Right ventricle myocardium superior (tissue), 1 donor: ENCODE measurements at regions of chr13 and their contacts with region 1.

Region 1: GRCh38 chr13:41222259-41222852 is 28.0 kb upstream of the KBTBD7 start:
- DNase-seq: no peak
- ATAC-seq: peak; percentile 90

Region 2: DNA sequence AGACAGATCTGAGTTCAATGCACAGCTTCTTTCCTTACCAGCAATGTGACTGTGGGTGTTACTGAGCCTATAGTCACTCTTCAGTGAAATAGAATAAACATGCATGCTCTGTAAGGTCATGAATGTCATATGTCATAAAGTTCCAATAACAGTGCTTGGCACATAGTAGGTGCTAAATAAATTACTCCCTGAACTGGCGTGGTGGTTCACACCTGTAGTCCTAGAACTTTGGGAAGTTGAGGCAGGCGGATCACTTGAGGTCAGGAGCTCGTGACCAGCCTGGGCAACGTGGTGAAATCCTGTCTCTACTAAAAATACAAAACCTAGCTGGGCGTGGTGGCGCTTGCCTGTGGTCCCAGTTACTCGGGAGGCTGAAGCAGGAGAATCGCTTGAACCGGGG is 147.8 kb before region 1 on chr13:
- intact Hi-C with region 1: loop called (anchors 5 kb)
- DNase-seq: no peak
- ATAC-seq: no peak